Psoas muscle (tissue), 8 donors: ENCODE measurements at regions of chrX and their contacts with region 1.

Region 1: DNA sequence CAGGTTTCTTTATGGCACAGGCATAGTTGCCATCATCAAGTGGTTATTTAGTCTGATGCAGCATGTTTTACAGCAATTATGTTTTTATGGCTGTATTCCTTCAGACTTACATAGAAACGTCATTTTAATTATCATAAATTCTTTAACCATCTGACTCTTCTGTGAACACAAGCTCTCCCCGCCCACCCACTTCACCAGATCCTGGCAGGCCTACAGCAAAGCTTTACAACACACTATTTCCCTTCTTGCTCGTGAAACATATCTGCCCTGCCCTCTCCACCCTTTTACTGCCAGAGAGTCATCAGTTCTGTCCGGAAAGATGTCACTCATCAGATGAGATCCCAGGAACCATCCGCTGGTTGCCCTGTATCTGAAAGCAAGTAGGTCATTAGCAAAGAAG is 120.5 kb downstream of the HS6ST2 start:
- DNase-seq: no peak
- ATAC-seq: peak in 1 of 4 donors; percentile 48
- H3K4me3 ChIP-seq: no peak overlapping the region
- H3K27ac ChIP-seq: no peak overlapping the region
- H3K4me1 ChIP-seq: no peaks in the 10 kb centered on the region
- H3K27me3 ChIP-seq: peaks cover 0 to 4% (median 0%) of the 10 kb centered on the region in 3 donors
- CTCF ChIP-seq: no peak

Region 2: GRCh38 chrX:132749406-132749805 is 88.6 kb before region 1 on chrX:
- intact Hi-C with region 1: loop called in 1 of 2 experiments (anchors 5 kb)
- DNase-seq: no peak
- ATAC-seq: peak; percentile 72 to 82 (median 78)
- H3K4me3 ChIP-seq: no peak overlapping the region
- H3K27ac ChIP-seq: peak overlapping the region; percentile 52
- H3K4me1 ChIP-seq: peaks cover 7% of the 10 kb centered on the region
- H3K27me3 ChIP-seq: no peaks in the 10 kb centered on the region
- CTCF ChIP-seq: no peak

Region 3: DNA sequence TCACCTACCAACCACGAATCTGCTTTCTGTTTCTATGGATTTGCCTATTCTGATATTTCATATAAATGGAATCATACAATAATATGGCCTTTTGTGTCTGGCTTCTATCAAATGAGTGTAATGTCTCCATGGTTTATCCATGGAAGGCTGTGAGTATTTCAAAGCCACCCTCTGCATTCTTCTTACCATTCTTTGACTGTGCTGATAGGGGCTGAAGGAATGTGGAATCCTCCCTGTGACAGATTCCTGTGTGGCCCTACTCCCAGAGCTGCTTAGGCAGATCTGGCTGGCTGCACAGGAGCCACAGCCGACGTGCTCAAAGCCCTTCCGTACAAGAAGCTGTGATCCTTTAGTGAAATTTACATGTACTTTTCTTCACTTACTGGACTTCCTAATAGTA is 42.8 kb before region 1 on chrX:
- intact Hi-C with region 1: loop called in 1 of 2 experiments (anchors 2 kb)
- DNase-seq: no peak
- ATAC-seq: no peak
- H3K4me3 ChIP-seq: no peak overlapping the region
- H3K27ac ChIP-seq: no peak overlapping the region
- H3K4me1 ChIP-seq: no peaks in the 10 kb centered on the region
- H3K27me3 ChIP-seq: peaks cover 0 to 22% (median 0%) of the 10 kb centered on the region in 3 donors
- CTCF ChIP-seq: no peak

Region 4: GRCh38 chrX:132809581-132809980 is 28.4 kb before region 1 on chrX:
- intact Hi-C with region 1: no loop called
- DNase-seq: no peak
- ATAC-seq: no peak
- H3K4me3 ChIP-seq: no peak overlapping the region
- H3K27ac ChIP-seq: no peak overlapping the region
- H3K4me1 ChIP-seq: no peaks in the 10 kb centered on the region
- H3K27me3 ChIP-seq: peaks cover 0 to 12% (median 0%) of the 10 kb centered on the region in 3 donors
- CTCF ChIP-seq: no peak

Region 5: DNA sequence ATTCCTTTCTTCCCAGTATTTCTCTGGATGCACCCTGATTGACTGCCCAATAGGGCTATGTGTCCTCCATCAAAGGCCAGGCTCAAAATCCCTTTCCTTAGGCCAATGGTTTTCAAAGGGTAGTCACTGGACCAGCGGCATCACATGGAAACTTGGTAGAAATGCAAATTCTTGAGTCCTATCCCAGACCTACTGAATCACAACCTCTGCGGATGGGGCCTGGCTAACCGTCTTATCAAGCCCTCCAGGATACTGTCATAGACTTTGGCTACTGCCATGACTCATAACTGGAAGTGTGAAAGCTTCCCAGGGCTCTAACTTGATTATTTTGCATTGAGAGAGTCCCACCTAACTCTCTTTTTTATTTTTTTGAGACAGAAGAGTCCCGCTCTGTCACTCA is 452.1 kb after region 1 on chrX:
- intact Hi-C with region 1: no loop called
- DNase-seq: no peak
- ATAC-seq: no peak
- H3K4me3 ChIP-seq: no peak overlapping the region
- H3K27ac ChIP-seq: no peak overlapping the region
- H3K4me1 ChIP-seq: no peaks in the 10 kb centered on the region
- H3K27me3 ChIP-seq: no peaks in the 10 kb centered on the region
- CTCF ChIP-seq: no peak